ENCODE measurements at regions of chr2 and their contacts with region 1.

Region 1: GRCh38 chr2:108719149-108720044 is at the start of gene RANBP2:
- DNase-seq: peak; percentile 92 to 95 (median 95)
- H3K4me3 ChIP-seq: peak within 1 kb of the TSS; percentile 15 to 86
- H3K4me3 Mint-ChIP-seq: peak within 1 kb of the TSS; percentile 93 to 98 (median 96)
- H3K27ac ChIP-seq: peak within 1 kb of the TSS; percentile 95
- H3K27ac Mint-ChIP-seq: peak within 1 kb of the TSS; percentile 98 to 100 (median 99)
- H3K4me1 ChIP-seq: peaks cover 27% of the 10 kb centered on the region
- H3K4me1 Mint-ChIP-seq: peaks cover 14 to 43% (median 27%) of the 10 kb centered on the region in 4 donors
- H3K27me3 ChIP-seq: no peaks in the 10 kb centered on the region
- H3K27me3 Mint-ChIP-seq: no peaks in the 10 kb centered on the region
- total RNA-seq, gene RANBP2: 89.8 to 102 TPM

Region 2: DNA sequence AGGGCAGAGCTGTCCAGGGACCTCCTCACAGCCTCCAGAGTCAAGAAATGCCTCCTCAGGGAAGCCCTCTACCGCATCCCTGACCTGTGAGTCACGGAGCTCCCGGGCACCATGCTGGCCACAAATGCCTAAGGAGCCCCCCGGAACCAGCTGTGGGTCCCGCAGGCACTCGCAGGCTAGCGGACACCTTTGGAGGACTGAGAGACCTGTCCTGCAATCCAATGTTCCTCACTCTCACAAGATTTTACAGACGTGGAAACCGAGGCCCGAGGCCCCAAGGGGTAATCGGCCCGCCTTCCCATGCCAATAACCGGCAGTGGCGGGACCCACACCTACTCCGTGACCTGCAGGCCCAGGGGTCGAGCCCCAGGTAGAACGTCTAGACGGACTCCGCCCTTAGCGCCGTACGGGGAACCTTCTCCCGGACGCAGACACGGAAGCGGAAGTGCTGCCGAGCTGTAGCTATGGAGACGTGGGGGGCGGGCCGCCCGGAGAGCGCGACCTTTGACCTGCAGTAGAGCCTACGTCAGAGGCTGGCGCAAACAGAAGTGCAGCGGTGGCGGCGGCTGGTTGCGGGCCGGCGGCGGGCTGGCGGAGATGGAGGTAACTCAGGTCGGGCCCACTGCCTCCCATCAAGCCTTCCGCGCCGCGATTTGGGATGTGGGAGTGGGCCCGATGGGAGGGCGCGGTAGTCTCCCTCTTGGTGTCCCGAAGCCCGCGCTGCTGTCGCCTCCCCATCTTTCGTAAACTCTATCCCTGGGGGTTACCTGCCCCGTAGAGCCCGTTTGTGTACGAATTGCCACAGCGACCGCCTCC is 270.5 kb before region 1 on chr2 and contains the start of gene GCC2:
- CTCF ChIA-PET with region 1: no interaction called
- POLR2A ChIA-PET with region 1: interaction called, 7 read pairs
- intact Hi-C with region 1: loop called (anchors 2 kb)
- DNase-seq: peak; percentile 96 to 97 (median 96)
- H3K4me3 ChIP-seq: peak within 1 kb of the TSS; percentile 83 to 100
- H3K4me3 Mint-ChIP-seq: peak within 1 kb of the TSS; percentile 95 to 100 (median 98)
- H3K27ac ChIP-seq: peak within 1 kb of the TSS; percentile 97
- H3K27ac Mint-ChIP-seq: peak within 1 kb of the TSS; percentile 98 to 100 (median 99)
- H3K4me1 ChIP-seq: peaks cover 32% of the 10 kb centered on the region
- H3K4me1 Mint-ChIP-seq: peaks cover 20 to 50% (median 34%) of the 10 kb centered on the region in 4 donors
- H3K27me3 ChIP-seq: no peaks in the 10 kb centered on the region
- H3K27me3 Mint-ChIP-seq: no peaks in the 10 kb centered on the region
- total RNA-seq, gene GCC2: 209 to 232 TPM

Region 3: GRCh38 chr2:108786354-108787199 is 67.2 kb after region 1 on chr2 and contains the start of gene CCDC138:
- CTCF ChIA-PET with region 1: no interaction called
- POLR2A ChIA-PET with region 1: no interaction called
- intact Hi-C with region 1: loop called (anchors 1 kb)
- DNase-seq: peak; percentile 89 to 91 (median 90)
- H3K4me3 ChIP-seq: peak within 1 kb of the TSS; percentile 37 to 78
- H3K4me3 Mint-ChIP-seq: peak within 1 kb of the TSS; percentile 93 to 100 (median 99)
- H3K27ac ChIP-seq: peak within 1 kb of the TSS; percentile 78
- H3K27ac Mint-ChIP-seq: peak within 1 kb of the TSS; percentile 80 to 99 (median 98)
- H3K4me1 ChIP-seq: peaks cover 15% of the 10 kb centered on the region
- H3K4me1 Mint-ChIP-seq: peaks cover 9 to 20% (median 11%) of the 10 kb centered on the region in 4 donors
- H3K27me3 ChIP-seq: no peaks in the 10 kb centered on the region
- H3K27me3 Mint-ChIP-seq: no peaks in the 10 kb centered on the region
- total RNA-seq, gene CCDC138: 4.2 to 4.9 TPM

Region 4: GRCh38 chr2:108916796-108917421 is 197.5 kb after region 1 on chr2:
- CTCF ChIA-PET with region 1: no interaction called
- POLR2A ChIA-PET with region 1: no interaction called
- intact Hi-C with region 1: no loop called
- DNase-seq: no peak
- H3K4me3 ChIP-seq: no peak overlapping the region
- H3K4me3 Mint-ChIP-seq: no peak overlapping the region
- H3K27ac ChIP-seq: no peak overlapping the region
- H3K27ac Mint-ChIP-seq: no peak overlapping the region
- H3K4me1 ChIP-seq: no peaks in the 10 kb centered on the region
- H3K4me1 Mint-ChIP-seq: peaks cover 0 to 2% (median 0%) of the 10 kb centered on the region in 4 donors
- H3K27me3 ChIP-seq: no peaks in the 10 kb centered on the region
- H3K27me3 Mint-ChIP-seq: no peaks in the 10 kb centered on the region

Measured in CD4-positive, alpha-beta memory T cell (primary cell).